ENCODE measurements at regions of chr7 and their contacts with region 1.

Region 1: DNA sequence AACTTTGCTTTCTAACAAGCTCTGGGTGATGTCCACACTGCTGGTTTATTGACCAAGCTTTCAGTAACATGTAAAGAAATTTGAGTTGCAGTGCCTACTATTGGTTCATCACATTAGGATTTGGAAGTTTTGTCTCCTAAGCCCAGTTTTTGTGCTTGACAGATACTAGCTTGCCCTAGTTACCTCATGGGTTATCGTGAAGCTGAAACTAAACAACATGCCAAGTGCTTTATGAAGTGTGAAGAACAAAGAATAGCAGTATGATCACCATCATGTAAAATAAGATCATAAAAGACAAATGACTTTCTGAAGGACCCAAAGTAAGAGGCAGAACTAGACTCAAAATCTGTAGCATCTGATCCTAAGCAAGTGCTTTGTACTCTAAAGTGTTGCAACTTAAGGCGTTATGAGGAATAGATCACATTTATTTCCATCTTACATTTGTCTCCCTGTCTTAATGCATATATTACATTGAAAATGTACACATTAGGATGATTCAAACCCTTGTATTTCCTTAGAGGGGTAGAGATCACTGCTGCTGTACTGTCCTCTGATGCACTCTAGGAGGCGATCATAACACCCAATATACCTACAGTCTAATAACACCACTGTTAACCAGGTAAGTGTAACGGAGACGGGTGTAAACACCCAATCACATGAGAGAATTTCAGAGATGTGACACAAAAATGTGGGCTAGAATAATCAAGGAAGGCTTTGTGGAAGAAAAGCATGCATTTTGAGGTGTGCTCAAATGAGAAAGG is 71.3 kb downstream of the NRCAM start:
- DNase-seq: no peak
- ATAC-seq: peak; percentile 65
- H3K4me3 Mint-ChIP-seq: no peak overlapping the region
- H3K27ac Mint-ChIP-seq: no peak overlapping the region
- H3K4me1 Mint-ChIP-seq: peaks cover 14% of the 10 kb centered on the region
- H3K27me3 Mint-ChIP-seq: peaks cover 3% of the 10 kb centered on the region
- CTCF ChIP-seq: no peak

Region 2: DNA sequence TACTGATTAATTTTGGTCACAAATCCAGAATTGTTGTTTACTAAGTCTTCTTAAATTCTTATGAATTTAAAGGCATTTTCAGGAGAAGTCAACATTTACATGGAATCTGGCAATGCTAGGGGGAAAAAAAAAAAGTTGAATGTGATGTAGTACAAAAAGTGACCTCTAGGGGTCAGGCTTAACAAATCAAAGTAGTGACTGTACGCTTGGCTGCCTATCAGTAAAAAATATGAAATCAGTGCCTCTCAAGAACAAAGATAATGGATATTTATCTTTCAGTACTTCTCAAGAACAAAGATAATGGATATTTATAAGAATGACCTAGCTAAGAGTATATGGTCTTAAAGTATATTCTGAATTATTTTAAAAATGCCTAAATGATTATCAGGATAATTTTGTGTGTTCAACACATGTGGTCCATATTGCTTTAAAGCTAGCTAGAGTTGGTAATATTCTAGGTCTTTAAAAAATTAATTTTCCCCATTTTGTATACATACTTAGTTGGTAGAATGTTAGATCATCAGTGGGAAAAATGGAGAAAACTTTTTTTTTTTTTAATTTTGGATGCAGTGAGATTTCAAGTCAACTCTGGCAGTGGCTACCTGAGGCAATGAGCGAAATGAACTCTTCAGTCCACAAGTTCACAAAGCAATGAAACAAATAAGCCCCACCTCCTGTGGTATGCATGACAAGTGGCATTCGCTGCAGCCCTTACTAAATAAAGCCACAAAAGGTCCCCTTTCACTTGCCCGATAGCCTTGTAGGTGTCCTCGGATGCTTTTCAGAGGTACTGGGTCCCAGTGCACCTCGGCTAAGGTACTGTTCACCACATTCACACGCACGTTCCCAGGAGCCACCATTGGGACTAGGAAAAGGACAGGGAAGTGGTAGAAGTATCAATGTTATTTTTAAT is 203.6 kb before region 1 on chr7:
- CTCF ChIA-PET with region 1: no interaction called
- POLR2A ChIA-PET with region 1: no interaction called
- intact Hi-C with region 1: loop called (anchors 10 kb)
- DNase-seq: no peak
- ATAC-seq: peak; percentile 60
- H3K4me3 Mint-ChIP-seq: no peak overlapping the region
- H3K27ac Mint-ChIP-seq: no peak overlapping the region
- H3K4me1 Mint-ChIP-seq: no peaks in the 10 kb centered on the region
- H3K27me3 Mint-ChIP-seq: no peaks in the 10 kb centered on the region
- CTCF ChIP-seq: peak; percentile 75

Region 3: GRCh38 chr7:108459931-108460551 is 75.1 kb after region 1 on chr7:
- CTCF ChIA-PET with region 1: interaction called, 4 read pairs
- POLR2A ChIA-PET with region 1: no interaction called
- intact Hi-C with region 1: loop called (anchors 1 kb)
- DNase-seq: no peak
- ATAC-seq: peak; percentile 36
- H3K4me3 Mint-ChIP-seq: no peak overlapping the region
- H3K27ac Mint-ChIP-seq: peak overlapping the region; percentile 12
- H3K4me1 Mint-ChIP-seq: peaks cover 11% of the 10 kb centered on the region
- H3K27me3 Mint-ChIP-seq: peaks cover 42% of the 10 kb centered on the region
- CTCF ChIP-seq: no peak

Measured in activated B cell treated with CpG ODN at 0.5 μM for 24 hours (primary cell).